ENCODE measurements at regions of chr5 and their contacts with region 1.

Region 1: GRCh38 chr5:78467752-78468357 is 107.4 kb downstream of the SCAMP1 start:
- DNase-seq: no peak
- H3K4me3 ChIP-seq: no peak overlapping the region
- H3K27ac ChIP-seq: no peak overlapping the region
- H3K4me1 ChIP-seq: peaks cover 0 to 5% (median 2%) of the 10 kb centered on the region in 4 donors
- H3K27me3 ChIP-seq: no peaks in the 10 kb centered on the region
- CTCF ChIP-seq: peak; percentile 65 to 79 (median 78)
- EP300 ChIP-seq: no peak
- POLR2A ChIP-seq: no peak

Region 2: GRCh38 chr5:78648359-78649210 is 180.7 kb after region 1 on chr5 and contains the start of gene LHFPL2:
- in situ Hi-C with region 1: no loop called
- intact Hi-C with region 1: loop called (anchors 5 kb)
- DNase-seq: peak; percentile 76
- H3K4me3 ChIP-seq: peak within 1 kb of the TSS; percentile 80 to 96 (median 87)
- H3K27ac ChIP-seq: peak within 1 kb of the TSS; percentile 94 to 97 (median 96)
- H3K4me1 ChIP-seq: peaks cover 0 to 42% (median 18%) of the 10 kb centered on the region in 4 donors
- H3K27me3 ChIP-seq: no peaks in the 10 kb centered on the region
- CTCF ChIP-seq: no peak
- EP300 ChIP-seq: no peak
- POLR2A ChIP-seq: peak; percentile 56
- total RNA-seq, gene LHFPL2: 34.4 to 79.6 (median 51.5) TPM

Measured in transverse colon (tissue), 4 donors.